Dendritic cell treated with granulocyte-macrophage colony-stimulating factor and Interleukin-4, amounts not matched to agents 40 ng/mL and 50 ng/mL, for 4 days (primary cell): ENCODE measurements at regions of chr7 and their contacts with region 1.

Region 1: GRCh38 chr7:1532483-1533424 is 2.3 kb downstream of the MAFK start:
- H3K4me3 Mint-ChIP-seq: peak overlapping the region; percentile 84
- H3K27ac Mint-ChIP-seq: peak overlapping the region; percentile 95
- H3K4me1 Mint-ChIP-seq: peaks cover 58% of the 10 kb centered on the region
- H3K27me3 Mint-ChIP-seq: no peaks in the 10 kb centered on the region

Region 2: GRCh38 chr7:1466524-1467271 is 66.1 kb before region 1 on chr7:
- intact Hi-C with region 1: no loop called
- H3K4me3 Mint-ChIP-seq: no peak overlapping the region
- H3K27ac Mint-ChIP-seq: peak overlapping the region; percentile 28
- H3K4me1 Mint-ChIP-seq: peaks cover 16% of the 10 kb centered on the region
- H3K27me3 Mint-ChIP-seq: peaks cover 2% of the 10 kb centered on the region

Region 3: GRCh38 chr7:1503816-1504775 is 28.7 kb before region 1 on chr7 and contains the start of gene INTS1:
- intact Hi-C with region 1: loop called (anchors 2 kb)
- H3K4me3 Mint-ChIP-seq: peak within 1 kb of the TSS; percentile 91
- H3K27ac Mint-ChIP-seq: peak within 1 kb of the TSS; percentile 78
- H3K4me1 Mint-ChIP-seq: peaks cover 49% of the 10 kb centered on the region
- H3K27me3 Mint-ChIP-seq: no peaks in the 10 kb centered on the region

Region 4: DNA sequence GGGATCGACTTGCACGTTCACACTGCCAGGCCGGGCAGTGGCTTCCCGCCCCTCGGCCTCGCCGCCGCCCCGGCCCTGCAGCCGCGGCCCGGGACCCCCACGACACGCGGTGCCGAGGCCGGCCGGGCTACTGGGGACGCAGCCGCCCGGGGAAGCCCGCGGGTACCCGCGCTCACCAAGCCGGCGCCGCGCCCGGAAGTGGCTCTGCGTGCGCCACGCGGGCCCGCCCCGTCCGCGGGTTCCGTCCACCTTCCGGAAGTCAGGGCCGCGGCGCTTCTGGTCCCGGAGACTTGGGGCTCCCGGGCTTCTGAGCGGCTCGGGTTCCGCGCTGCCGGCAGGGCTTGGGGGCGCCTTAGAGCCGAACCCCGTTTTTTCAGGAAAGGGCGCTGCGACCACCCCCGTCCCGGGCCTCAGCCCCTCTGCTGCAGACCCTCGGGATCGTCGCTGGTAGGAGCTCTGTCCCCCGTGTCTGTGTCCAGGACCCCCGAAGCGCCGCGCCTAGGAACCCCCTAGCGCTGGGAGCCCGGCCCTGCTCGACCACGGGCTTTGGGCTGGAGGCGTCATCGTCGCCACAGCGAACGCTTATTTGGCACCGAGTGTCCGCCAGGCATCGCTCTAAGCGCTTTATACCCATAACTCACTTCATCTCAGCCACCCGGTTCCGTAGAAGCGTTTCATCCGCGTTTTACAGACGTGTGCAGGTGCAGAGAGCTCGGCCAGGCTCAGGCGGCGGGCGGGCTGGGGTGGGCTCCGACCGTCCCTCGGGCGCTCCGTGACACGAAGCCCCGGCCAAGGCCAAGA is 37.3 kb after region 1 on chr7 and contains the start of gene PSMG3:
- intact Hi-C with region 1: loop called (anchors 1 kb)
- H3K4me3 Mint-ChIP-seq: peak within 1 kb of the TSS; percentile 94
- H3K27ac Mint-ChIP-seq: peak within 1 kb of the TSS; percentile 93
- H3K4me1 Mint-ChIP-seq: peaks cover 75% of the 10 kb centered on the region
- H3K27me3 Mint-ChIP-seq: no peaks in the 10 kb centered on the region